Heart right ventricle (tissue), 16 donors: ENCODE measurements at regions of chr5 and their contacts with region 1.

Region 1: DNA sequence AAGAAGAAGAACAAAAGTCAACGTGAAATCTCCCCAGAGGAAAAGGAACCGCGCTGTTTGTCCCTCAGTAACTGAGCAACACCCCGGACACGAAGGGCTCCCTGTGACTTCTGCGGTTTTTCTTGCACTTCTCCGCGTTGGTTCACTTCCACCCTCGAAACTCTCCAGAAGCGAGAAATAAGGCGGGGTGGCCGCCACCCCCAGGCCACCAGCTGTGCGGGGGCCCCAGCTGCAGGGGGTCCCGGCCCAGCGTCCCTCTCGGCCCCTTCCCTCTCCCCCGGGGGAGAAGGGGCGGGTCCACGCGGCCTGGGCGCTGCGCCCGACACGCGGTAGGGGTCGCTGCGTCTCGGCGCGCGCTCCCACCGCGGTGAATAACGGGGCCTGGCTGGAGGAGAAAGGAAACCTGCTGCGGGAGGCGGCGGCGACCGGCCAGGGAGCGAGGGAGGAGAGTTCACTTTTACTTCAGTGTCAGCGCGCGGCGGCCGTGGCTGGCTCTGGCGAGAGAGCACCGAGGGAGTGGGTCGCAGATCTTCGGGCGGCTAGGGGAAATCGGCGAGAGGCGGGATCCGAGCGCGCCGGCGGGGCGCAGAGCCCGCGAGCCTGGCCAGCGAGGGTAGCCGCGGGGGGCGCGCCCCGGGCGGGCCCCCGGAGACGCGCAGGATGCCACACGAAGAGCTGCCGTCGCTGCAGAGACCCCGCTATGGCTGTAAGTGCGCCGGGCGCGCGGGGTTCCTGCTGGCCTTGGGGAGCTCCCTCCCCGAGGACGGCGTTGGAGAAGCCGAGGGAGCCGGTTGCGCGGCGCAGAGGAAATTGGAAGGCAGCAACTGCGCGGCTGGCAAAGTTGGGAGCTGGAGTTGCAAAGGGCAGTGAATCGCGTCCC is at the start of gene IQGAP2:
- DNase-seq: peak; percentile 63 to 69
- ATAC-seq: peak; percentile 77 to 91 (median 86)
- H3K4me3 ChIP-seq: peak within 1 kb of the TSS in 9 of 10 donors; percentile 51 to 79 (median 64)
- H3K27ac ChIP-seq: peak within 1 kb of the TSS in 9 of 10 donors; percentile 13 to 97 (median 59)
- H3K4me1 ChIP-seq: peaks cover 0 to 65% (median 19%) of the 10 kb centered on the region in 9 donors
- H3K27me3 ChIP-seq: peaks cover 4 to 56% (median 29%) of the 10 kb centered on the region in 7 donors
- CTCF ChIP-seq: peak; percentile 12 to 83 (median 68)
- total RNA-seq, gene IQGAP2: 2.6 to 22.3 (median 5.3) TPM

Region 2: DNA sequence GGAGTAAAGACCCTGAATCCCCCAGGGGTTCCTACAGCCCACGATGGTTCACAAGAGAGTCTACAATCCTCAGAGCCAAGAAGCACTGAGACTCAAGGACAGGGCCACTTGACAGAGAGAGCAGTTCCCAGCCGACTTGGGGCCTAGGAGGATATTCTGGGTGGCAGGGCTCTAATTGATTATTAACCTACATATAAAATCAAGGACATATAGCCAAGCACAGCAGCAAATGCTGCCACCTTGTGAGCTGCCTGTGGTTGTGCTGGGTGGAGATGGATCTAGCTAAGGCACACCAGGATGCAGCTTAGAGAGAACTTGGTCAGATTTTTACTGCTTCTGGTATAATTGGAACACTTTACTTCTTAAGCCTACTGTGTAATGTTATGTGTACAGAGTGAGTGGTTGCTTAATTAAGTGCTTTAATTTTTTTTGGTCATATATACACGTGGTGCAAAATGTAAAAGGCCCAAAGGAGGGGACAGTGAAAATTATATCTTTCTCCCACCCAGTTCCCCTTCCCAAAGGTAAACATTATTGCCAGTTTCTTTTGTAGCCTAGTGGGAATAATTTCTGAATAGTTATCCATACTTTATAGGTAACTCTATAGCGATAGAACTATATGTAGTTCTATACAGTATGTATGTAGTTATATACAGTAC is 141.3 kb after region 1 on chr5:
- intact Hi-C with region 1: loop called in 2 of 10 experiments (anchors 10 kb)
- DNase-seq: no peak
- ATAC-seq: peak in 1 of 8 donors; percentile 40
- H3K4me3 ChIP-seq: no peak overlapping the region
- H3K27ac ChIP-seq: peak overlapping the region in 1 of 10 donors; percentile 78
- H3K4me1 ChIP-seq: peaks cover 0 to 67% (median 0%) of the 10 kb centered on the region in 9 donors
- H3K27me3 ChIP-seq: peaks cover 0 to 8% (median 0%) of the 10 kb centered on the region in 7 donors
- CTCF ChIP-seq: peak in 4 of 9 donors; percentile 14 to 59 (median 23)

Region 3: DNA sequence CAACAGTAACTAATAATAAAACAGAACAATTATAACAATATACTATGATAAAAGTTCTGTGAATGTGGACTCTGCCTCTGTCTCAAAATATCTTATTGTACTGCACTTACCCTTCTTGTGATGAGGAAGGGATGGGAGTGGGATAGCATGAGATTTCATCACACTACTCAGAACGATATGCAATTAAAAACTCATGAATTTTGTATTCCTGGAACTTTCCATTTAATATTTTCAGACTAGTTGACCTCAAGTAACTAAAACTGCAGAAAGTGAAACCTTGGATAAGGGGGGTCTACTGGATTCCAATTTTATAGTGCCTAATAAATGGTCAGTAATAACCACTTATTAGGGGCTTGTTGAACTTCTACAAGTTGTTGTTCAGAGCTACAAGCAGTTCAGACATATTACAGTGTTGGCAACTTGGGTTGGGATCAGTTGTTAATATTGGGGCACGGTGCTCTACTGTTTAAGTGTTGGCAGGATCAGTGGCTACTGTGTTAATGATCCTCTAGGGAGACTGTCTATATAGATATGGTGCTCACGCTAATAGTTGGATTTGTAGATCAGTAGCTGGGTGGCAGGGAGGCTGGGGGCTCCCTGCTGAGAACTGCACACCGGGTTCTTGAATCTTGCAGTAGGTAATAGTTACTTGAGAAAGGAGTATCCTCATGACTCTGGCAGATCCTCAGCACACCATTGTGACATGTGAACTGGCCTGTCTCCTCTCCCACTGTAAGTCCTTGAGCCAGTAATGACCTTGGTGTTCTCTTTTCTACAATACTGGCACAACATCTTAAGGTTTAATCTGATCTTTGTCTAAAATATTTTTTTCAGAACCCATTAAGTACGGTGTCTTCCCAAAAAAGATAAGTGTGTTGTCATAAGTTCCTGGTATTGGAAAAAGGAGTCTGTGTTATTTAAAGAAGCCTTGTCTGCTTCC is 158.1 kb after region 1 on chr5:
- intact Hi-C with region 1: loop called in 1 of 10 experiments (anchors 10 kb)
- DNase-seq: no peak
- ATAC-seq: no peak
- H3K4me3 ChIP-seq: no peak overlapping the region
- H3K27ac ChIP-seq: no peak overlapping the region
- H3K4me1 ChIP-seq: peaks cover 0 to 11% (median 0%) of the 10 kb centered on the region in 9 donors
- H3K27me3 ChIP-seq: peaks cover 0 to 5% (median 0%) of the 10 kb centered on the region in 7 donors
- CTCF ChIP-seq: no peak

Region 4: DNA sequence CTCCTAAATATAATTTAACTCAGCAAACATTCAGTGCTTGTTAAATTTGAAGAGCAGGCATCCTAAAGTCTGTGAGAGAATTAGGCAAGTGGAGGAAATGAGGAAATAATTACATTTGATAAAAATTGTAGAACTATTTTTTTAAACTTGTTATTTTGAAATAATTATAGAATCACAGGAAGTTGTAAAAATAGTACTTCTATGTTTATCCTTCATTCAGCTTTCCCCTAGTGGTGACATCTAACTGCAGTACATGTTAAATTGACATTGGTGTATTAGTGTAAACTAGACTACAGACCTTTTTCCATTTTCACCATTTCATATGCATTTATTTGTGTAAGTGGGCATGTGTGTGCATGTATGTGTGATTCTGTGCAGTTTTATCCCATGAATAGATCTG is 168.4 kb after region 1 on chr5:
- intact Hi-C with region 1: loop called in 3 of 10 experiments (anchors 10 kb)
- DNase-seq: no peak
- ATAC-seq: no peak
- H3K4me3 ChIP-seq: no peak overlapping the region
- H3K27ac ChIP-seq: no peak overlapping the region
- H3K4me1 ChIP-seq: peaks cover 0 to 14% (median 0%) of the 10 kb centered on the region in 9 donors
- H3K27me3 ChIP-seq: no peaks in the 10 kb centered on the region
- CTCF ChIP-seq: peak in 2 of 9 donors; percentile 16 to 20

Region 5: GRCh38 chr5:77129391-77129990 is 726.4 kb after region 1 on chr5:
- intact Hi-C with region 1: no loop called
- DNase-seq: no peak
- ATAC-seq: peak in 1 of 8 donors; percentile 57
- H3K4me3 ChIP-seq: no peak overlapping the region
- H3K27ac ChIP-seq: no peak overlapping the region
- H3K4me1 ChIP-seq: peaks cover 0 to 8% (median 0%) of the 10 kb centered on the region in 9 donors
- H3K27me3 ChIP-seq: no peaks in the 10 kb centered on the region
- CTCF ChIP-seq: peak in 4 of 9 donors; percentile 24 to 44 (median 33)